ENCODE measurements at regions of chr18 and their contacts with region 1.

Region 1: DNA sequence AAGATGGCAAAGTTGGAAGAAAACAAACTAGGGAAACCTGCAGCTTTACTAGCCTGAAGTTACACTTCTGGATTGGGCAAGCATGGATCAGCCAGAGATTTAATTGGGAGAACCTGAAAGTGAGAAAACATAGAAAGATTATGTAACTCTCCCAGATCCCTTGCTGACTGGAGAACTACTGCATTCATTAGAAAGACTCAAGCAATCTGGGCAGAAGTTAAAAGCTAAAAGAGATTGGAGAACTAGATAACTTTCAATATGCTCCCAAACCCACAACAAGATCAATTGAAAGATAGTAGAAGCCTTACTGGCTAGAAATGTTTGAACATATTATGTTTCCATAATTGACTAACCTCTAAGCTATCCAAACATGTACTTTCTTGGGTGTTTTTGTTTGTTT is 185.9 kb downstream of the METTL4 start:
- DNase-seq: no peak
- H3K4me3 ChIP-seq: no peak overlapping the region
- H3K27ac ChIP-seq: no peak overlapping the region
- H3K4me1 ChIP-seq: no peaks in the 10 kb centered on the region
- H3K27me3 ChIP-seq: peaks cover 0 to 2% of the 10 kb centered on the region in 2 experiments
- CTCF ChIP-seq: no peak
- POLR2A ChIP-seq: no peak

Region 2: GRCh38 chr18:2293109-2293839 is 92.2 kb before region 1 on chr18:
- CTCF ChIA-PET with region 1: no interaction called
- POLR2A ChIA-PET with region 1: no interaction called
- dilution Hi-C with region 1: no loop called
- intact Hi-C with region 1: no loop called
- DNase-seq: no peak
- H3K4me3 ChIP-seq: no peak overlapping the region
- H3K27ac ChIP-seq: no peak overlapping the region
- H3K4me1 ChIP-seq: no peaks in the 10 kb centered on the region
- H3K27me3 ChIP-seq: no peaks in the 10 kb centered on the region
- CTCF ChIP-seq: no peak
- POLR2A ChIP-seq: no peak

Region 3: GRCh38 chr18:2395427-2396161 is 10.2 kb after region 1 on chr18:
- CTCF ChIA-PET with region 1: interaction called, 5 read pairs
- POLR2A ChIA-PET with region 1: no interaction called
- dilution Hi-C with region 1: no loop called
- intact Hi-C with region 1: loop called (anchors 1 kb)
- DNase-seq: no peak
- H3K4me3 ChIP-seq: no peak overlapping the region
- H3K27ac ChIP-seq: no peak overlapping the region
- H3K4me1 ChIP-seq: no peaks in the 10 kb centered on the region
- H3K27me3 ChIP-seq: no peaks in the 10 kb centered on the region
- CTCF ChIP-seq: no peak
- POLR2A ChIP-seq: no peak